MCF 10A (cell line): ENCODE measurements at regions of chr17 and their contacts with region 1.

Region 1: DNA sequence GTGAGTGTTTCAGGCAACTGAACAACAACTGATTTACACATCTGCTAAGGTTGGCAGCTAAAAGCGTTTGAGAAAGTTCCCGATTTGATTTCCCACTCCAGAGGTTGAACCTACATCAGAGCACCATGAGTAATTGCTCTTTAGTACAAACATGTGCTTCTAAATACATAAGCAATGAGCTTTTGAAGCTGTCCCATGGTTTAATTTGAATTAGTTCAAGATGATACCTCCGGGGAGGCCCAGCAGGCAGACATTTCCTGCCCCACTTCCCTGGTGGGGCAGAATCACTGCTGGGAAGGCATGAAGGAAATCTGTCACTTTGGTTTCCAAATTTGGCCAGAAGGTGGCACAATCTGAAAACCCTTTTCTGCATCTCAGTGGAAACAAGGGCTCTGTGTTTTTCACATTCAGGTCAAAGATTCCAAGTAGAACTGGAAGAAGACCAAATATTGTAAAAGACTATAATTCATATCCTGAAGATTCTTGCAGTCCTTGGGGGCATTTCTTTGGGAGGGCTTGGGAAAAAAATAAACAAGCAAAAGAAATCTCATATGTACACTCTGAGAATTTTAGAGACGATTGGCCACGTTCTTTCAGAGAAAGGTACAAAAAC is 176.2 kb upstream of the FAM20A start:
- DNase-seq: peak; percentile 75
- H3K4me3 Mint-ChIP-seq: no peak overlapping the region
- H3K27ac Mint-ChIP-seq: no peak overlapping the region
- H3K4me1 Mint-ChIP-seq: peaks cover 6% of the 10 kb centered on the region
- H3K27me3 Mint-ChIP-seq: no peaks in the 10 kb centered on the region
- CTCF ChIP-seq: peak; percentile 55

Region 2: DNA sequence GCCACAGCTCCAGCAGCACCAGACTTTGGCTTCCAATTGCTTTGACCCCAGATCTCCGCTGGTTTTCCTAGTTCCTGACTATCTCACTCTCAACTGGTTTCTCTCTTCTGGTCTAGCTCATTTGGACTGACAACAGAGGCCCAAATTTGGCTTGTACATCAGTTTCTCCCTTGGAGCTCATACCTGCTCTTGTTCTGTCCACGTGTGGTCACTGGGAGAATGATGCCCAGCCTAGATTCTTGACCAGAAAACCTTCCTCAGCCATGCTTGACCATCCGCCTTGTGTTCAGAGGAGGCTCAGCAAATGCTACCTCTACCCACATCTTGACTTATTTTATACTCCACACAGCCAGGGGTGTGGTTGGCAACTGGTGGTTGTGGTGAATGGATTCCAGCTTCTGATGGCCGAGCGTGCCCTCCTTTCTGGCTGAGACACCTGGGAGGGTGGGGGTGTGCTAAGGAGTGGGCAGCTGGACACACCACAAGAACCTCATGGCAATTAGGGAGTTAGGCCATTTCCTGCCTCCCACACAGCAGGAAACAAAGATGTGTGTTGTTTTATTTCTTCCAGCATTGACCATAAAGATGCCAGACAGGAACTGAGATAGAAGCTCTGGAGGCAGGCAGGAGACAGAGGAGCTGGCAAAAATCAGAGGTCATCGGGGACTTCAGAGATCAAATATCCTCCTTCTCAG is 82.4 kb before region 1 on chr17:
- CTCF ChIA-PET with region 1: no interaction called
- POLR2A ChIA-PET with region 1: no interaction called
- intact Hi-C with region 1: no loop called
- DNase-seq: no peak
- H3K4me3 Mint-ChIP-seq: no peak overlapping the region
- H3K27ac Mint-ChIP-seq: no peak overlapping the region
- H3K4me1 Mint-ChIP-seq: peaks cover 25% of the 10 kb centered on the region
- H3K27me3 Mint-ChIP-seq: no peaks in the 10 kb centered on the region
- CTCF ChIP-seq: no peak

Region 3: DNA sequence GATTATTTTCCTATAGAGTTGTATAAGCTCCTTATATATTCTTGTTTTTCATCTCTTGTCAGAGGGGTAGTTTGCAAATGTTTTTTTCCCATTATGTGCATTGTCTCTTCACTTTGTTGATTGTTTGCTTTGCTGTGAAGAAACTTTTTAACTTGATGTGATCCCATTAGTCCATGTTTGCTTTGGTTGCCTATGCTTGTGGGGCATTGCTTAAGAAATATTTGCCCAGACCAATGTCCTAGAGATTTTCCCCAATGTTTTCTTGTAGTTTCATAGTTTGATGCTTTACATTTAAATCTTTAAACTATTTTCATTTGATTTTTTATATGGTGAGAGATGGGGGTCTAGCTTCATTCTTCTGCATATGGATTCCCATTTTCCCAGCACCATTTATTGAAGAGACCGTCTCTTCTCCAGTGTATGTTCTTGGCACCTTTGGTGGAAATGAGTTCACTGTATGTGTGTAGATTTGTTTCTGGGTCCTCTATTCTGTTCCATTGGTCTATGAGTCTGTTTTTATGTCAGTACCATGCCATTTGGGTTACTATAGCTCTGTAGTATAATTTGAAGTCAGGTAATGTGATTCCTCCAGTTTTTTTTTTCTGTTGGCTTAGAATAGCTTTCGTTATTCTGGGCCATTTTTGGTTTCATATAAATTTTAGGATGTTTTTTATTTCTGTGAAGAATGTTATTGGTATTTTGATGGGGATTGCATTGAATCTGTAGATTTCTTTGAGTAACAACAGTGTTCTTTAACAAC is 12.0 kb after region 1 on chr17:
- CTCF ChIA-PET with region 1: interaction called, 19 read pairs
- POLR2A ChIA-PET with region 1: interaction called, 4 read pairs
- intact Hi-C with region 1: no loop called
- DNase-seq: no peak
- H3K4me3 Mint-ChIP-seq: no peak overlapping the region
- H3K27ac Mint-ChIP-seq: no peak overlapping the region
- H3K4me1 Mint-ChIP-seq: peaks cover 12% of the 10 kb centered on the region
- H3K27me3 Mint-ChIP-seq: no peaks in the 10 kb centered on the region
- CTCF ChIP-seq: no peak

Region 4: DNA sequence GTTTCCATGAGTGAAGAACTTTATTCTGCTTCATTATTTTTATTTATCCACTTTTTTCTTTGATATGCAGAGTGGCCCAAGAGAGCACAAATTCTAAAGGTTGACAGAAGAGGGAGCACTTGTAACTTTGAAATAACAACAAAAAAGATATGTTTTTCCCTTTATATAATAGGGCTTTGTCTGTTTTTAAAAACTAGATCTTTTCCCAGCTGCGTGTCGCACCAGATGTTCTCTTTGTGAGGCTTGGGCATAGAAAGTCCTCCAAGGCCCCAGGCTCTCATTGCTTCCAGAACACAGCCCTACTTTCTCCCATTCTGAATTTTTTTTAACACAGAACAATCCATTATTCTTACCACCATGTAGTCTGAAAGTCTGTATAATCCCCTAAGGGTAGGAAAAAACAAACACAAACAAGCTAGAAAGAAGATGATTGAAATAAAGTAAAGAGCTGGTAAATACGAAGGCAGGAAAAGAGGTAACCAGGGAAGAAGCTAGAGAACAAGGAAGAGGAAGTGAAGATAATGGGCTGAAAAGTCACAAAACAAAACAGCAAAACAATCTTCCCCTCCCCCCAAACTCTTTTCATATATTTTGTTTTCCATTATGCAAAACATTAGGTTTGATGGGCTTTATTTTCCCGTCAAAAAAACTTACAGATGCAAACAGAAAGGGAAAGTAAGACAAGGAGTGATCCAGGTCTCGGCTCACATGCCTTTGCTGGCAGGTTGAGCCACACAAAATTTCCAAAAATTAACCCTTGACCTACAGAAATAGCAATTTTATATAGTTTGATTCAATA is 17.5 kb after region 1 on chr17:
- CTCF ChIA-PET with region 1: interaction called, 19 read pairs
- POLR2A ChIA-PET with region 1: no interaction called
- intact Hi-C with region 1: no loop called
- DNase-seq: peak; percentile 26
- H3K4me3 Mint-ChIP-seq: no peak overlapping the region
- H3K27ac Mint-ChIP-seq: peak overlapping the region; percentile 40
- H3K4me1 Mint-ChIP-seq: peaks cover 20% of the 10 kb centered on the region
- H3K27me3 Mint-ChIP-seq: no peaks in the 10 kb centered on the region
- CTCF ChIP-seq: peak; percentile 37

Region 5: GRCh38 chr17:68832109-68832802 is 54.9 kb after region 1 on chr17:
- CTCF ChIA-PET with region 1: no interaction called
- POLR2A ChIA-PET with region 1: no interaction called
- intact Hi-C with region 1: no loop called
- DNase-seq: no peak
- H3K4me3 Mint-ChIP-seq: no peak overlapping the region
- H3K27ac Mint-ChIP-seq: no peak overlapping the region
- H3K4me1 Mint-ChIP-seq: no peaks in the 10 kb centered on the region
- H3K27me3 Mint-ChIP-seq: no peaks in the 10 kb centered on the region
- CTCF ChIP-seq: no peak

Region 6: GRCh38 chr17:68910251-68910705 is 132.9 kb after region 1 on chr17:
- CTCF ChIA-PET with region 1: interaction called, 5 read pairs
- POLR2A ChIA-PET with region 1: interaction called, 4 read pairs
- intact Hi-C with region 1: loop called (anchors 5 kb)
- DNase-seq: peak; percentile 23
- H3K4me3 Mint-ChIP-seq: no peak overlapping the region
- H3K27ac Mint-ChIP-seq: peak overlapping the region; percentile 96
- H3K4me1 Mint-ChIP-seq: peaks cover 12% of the 10 kb centered on the region
- H3K27me3 Mint-ChIP-seq: no peaks in the 10 kb centered on the region
- CTCF ChIP-seq: no peak

Region 7: GRCh38 chr17:68972119-68972704 is 194.9 kb after region 1 on chr17:
- CTCF ChIA-PET with region 1: interaction called, 25 read pairs
- POLR2A ChIA-PET with region 1: interaction called, 3 read pairs
- intact Hi-C with region 1: loop called (anchors 1 kb)
- DNase-seq: peak; percentile 48
- H3K4me3 Mint-ChIP-seq: no peak overlapping the region
- H3K27ac Mint-ChIP-seq: no peak overlapping the region
- H3K4me1 Mint-ChIP-seq: no peaks in the 10 kb centered on the region
- H3K27me3 Mint-ChIP-seq: no peaks in the 10 kb centered on the region
- CTCF ChIP-seq: peak; percentile 63

Region 8: GRCh38 chr17:69235338-69235930 is 458.1 kb after region 1 on chr17:
- CTCF ChIA-PET with region 1: interaction called, 52 read pairs
- POLR2A ChIA-PET with region 1: interaction called, 3 read pairs
- intact Hi-C with region 1: loop called (anchors 1 kb)
- DNase-seq: peak; percentile 93
- H3K4me3 Mint-ChIP-seq: no peak overlapping the region
- H3K27ac Mint-ChIP-seq: no peak overlapping the region
- H3K4me1 Mint-ChIP-seq: peaks cover 5% of the 10 kb centered on the region
- H3K27me3 Mint-ChIP-seq: no peaks in the 10 kb centered on the region
- CTCF ChIP-seq: peak; percentile 86

Region 9: GRCh38 chr17:69246726-69247375 is 469.5 kb after region 1 on chr17:
- CTCF ChIA-PET with region 1: interaction called, 52 read pairs
- POLR2A ChIA-PET with region 1: interaction called, 3 read pairs
- intact Hi-C with region 1: loop called (anchors 1 kb)
- DNase-seq: peak; percentile 62
- H3K4me3 Mint-ChIP-seq: no peak overlapping the region
- H3K27ac Mint-ChIP-seq: no peak overlapping the region
- H3K4me1 Mint-ChIP-seq: peaks cover 4% of the 10 kb centered on the region
- H3K27me3 Mint-ChIP-seq: no peaks in the 10 kb centered on the region
- CTCF ChIP-seq: peak; percentile 36